HepG2 (cell line): ENCODE measurements at regions of chr16 and their contacts with region 1.

Region 1: DNA sequence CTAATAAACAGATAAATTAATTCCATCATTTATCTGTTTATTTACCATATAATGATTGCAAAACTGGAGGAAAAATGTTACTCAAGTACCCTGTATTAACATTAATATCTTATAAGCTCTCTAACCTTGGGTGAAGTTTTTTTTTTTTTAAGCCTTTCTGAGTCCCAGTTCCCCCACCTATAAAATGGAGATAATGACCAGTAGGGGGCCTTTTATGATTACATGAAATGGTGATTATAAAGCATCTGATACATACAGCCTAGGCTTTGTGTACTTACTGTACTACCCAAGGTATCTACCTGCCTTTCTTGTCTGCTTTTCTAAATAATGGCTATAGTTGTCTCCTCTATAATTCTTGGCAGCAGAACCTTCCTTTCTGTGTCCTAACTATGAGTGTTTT is 22.6 kb downstream of the LRRC36 start:
- DNase-seq: peak; percentile 53
- ATAC-seq: peak; percentile 59; the same call in 2 of the 3 replicates
- H3K4me3 ChIP-seq: no peak overlapping the region
- H3K27ac ChIP-seq: no peak overlapping the region
- H3K4me1 ChIP-seq: peaks cover 28% of the 10 kb centered on the region
- H3K27me3 ChIP-seq: no peaks in the 10 kb centered on the region
- CTCF ChIP-seq: peak; percentile 45
- EP300 ChIP-seq: no peak
- POLR2A ChIP-seq: no peak
- RAD21 ChIP-seq: no peak

Region 2: GRCh38 chr16:67393035-67393787 is 44.0 kb after region 1 on chr16 and contains the start of gene TPPP3:
- CTCF ChIA-PET with region 1: interaction called, 3 read pairs
- POLR2A ChIA-PET with region 1: no interaction called
- in situ Hi-C with region 1: no loop called
- intact Hi-C with region 1: loop called (anchors 1 kb)
- DNase-seq: peak; percentile 77
- ATAC-seq: peak; percentile 74
- H3K4me3 ChIP-seq: peak within 1 kb of the TSS; percentile 9 to 73 (median 31); a peak in 4 of 6 replicates
- H3K27ac ChIP-seq: no peak within 1 kb of the TSS
- H3K4me1 ChIP-seq: peaks cover 44% of the 10 kb centered on the region
- H3K27me3 ChIP-seq: peaks cover 6 to 65% of the 10 kb centered on the region in 2 experiments; a peak in 4 of 5 replicates
- CTCF ChIP-seq: peak; percentile 79
- EP300 ChIP-seq: peak in 1 of 2 experiments; percentile 42; a peak in 1 of 4 replicates
- POLR2A ChIP-seq: peak in 1 of 2 experiments; percentile 24; a peak in 1 of 4 replicates
- RAD21 ChIP-seq: peak; percentile 80
- total RNA-seq, gene TPPP3: 0.20 and 0.44 TPM in 2 replicates

Region 3: GRCh38 chr16:67406111-67406890 is 57.1 kb after region 1 on chr16:
- CTCF ChIA-PET with region 1: interaction called, 4 read pairs
- POLR2A ChIA-PET with region 1: no interaction called
- in situ Hi-C with region 1: no loop called
- intact Hi-C with region 1: loop called (anchors 2 kb)
- DNase-seq: no peak
- ATAC-seq: no peak
- H3K4me3 ChIP-seq: no peak overlapping the region
- H3K27ac ChIP-seq: no peak overlapping the region
- H3K4me1 ChIP-seq: peaks cover 28% of the 10 kb centered on the region
- H3K27me3 ChIP-seq: peaks cover 0 to 14% of the 10 kb centered on the region in 2 experiments; a peak in 3 of 5 replicates
- CTCF ChIP-seq: no peak
- EP300 ChIP-seq: no peak
- POLR2A ChIP-seq: no peak
- RAD21 ChIP-seq: no peak